H1 (cell line): ENCODE measurements at regions of chr20 and their contacts with region 1.

Region 1: DNA sequence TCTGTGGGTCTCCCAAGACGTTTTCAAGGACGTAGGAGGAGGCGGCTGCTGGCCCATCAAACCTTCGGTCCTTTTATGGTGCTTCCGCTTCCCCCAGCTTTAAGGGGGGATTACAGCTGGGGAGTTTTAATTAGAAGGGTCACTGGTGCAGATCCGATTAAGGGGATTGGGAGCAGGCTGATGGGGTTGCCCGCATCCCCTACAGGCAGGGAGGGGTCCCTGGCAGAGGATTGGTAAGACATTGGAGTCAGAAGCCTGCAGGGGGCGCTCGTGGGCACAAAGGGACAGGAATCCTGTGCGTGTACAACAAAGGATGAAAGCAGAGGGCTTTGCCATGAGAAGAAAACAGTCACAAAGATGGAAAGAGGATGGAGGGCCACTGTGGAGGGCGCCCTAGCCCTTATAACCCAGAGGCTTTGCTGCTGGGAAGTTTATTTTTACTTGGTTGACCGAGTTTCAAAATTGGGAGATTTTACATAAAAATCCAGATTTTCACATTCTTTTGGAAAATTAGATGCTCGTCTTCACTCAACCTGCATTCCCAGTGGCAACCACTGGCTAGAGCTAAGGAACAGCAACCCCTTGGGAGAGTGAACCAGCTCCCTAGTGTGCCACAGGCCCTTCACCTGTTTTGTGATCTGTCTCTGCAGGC is 97.9 kb downstream of the KCNB1 start:
- DNase-seq: peak; percentile 71 to 98
- H3K4me3 ChIP-seq: no peak overlapping the region
- H3K27ac ChIP-seq: no peak overlapping the region
- H3K4me1 ChIP-seq: peaks cover 2 to 8% (median 4%) of the 10 kb centered on the region in 4 experiments; a peak in 4 of 7 replicates
- H3K27me3 ChIP-seq: no peaks in the 10 kb centered on the region; a peak in 1 of 7 replicates
- CTCF ChIP-seq: peak; percentile 77 to 92 (median 89)
- EP300 ChIP-seq: no peak
- POLR2A ChIP-seq: no peak
- RAD21 ChIP-seq: peak; percentile 53 to 71

Region 2: GRCh38 chr20:49344975-49345374 is 39.6 kb before region 1 on chr20:
- CTCF ChIA-PET with region 1: interaction called, 12 read pairs
- POLR2A ChIA-PET with region 1: no interaction called
- DNase-seq: no peak
- H3K4me3 ChIP-seq: no peak overlapping the region
- H3K27ac ChIP-seq: no peak overlapping the region
- H3K4me1 ChIP-seq: no peaks in the 10 kb centered on the region
- H3K27me3 ChIP-seq: no peaks in the 10 kb centered on the region
- CTCF ChIP-seq: no peak
- EP300 ChIP-seq: no peak
- POLR2A ChIP-seq: no peak
- RAD21 ChIP-seq: no peak

Region 3: GRCh38 chr20:49372095-49372726 is 12.4 kb before region 1 on chr20:
- CTCF ChIA-PET with region 1: interaction called, 32 read pairs
- POLR2A ChIA-PET with region 1: interaction called, 4 read pairs
- DNase-seq: no peak
- H3K4me3 ChIP-seq: no peak overlapping the region
- H3K27ac ChIP-seq: no peak overlapping the region
- H3K4me1 ChIP-seq: no peaks in the 10 kb centered on the region; a peak in 1 of 7 replicates
- H3K27me3 ChIP-seq: no peaks in the 10 kb centered on the region
- CTCF ChIP-seq: no peak
- EP300 ChIP-seq: no peak
- POLR2A ChIP-seq: no peak
- RAD21 ChIP-seq: no peak

Region 4: GRCh38 chr20:49418809-49419208 is 34.2 kb after region 1 on chr20:
- CTCF ChIA-PET with region 1: interaction called, 29 read pairs
- POLR2A ChIA-PET with region 1: no interaction called
- DNase-seq: no peak
- H3K4me3 ChIP-seq: no peak overlapping the region
- H3K27ac ChIP-seq: no peak overlapping the region
- H3K4me1 ChIP-seq: no peaks in the 10 kb centered on the region; a peak in 1 of 7 replicates
- H3K27me3 ChIP-seq: no peaks in the 10 kb centered on the region
- CTCF ChIP-seq: no peak
- EP300 ChIP-seq: no peak
- POLR2A ChIP-seq: no peak
- RAD21 ChIP-seq: no peak

Region 5: DNA sequence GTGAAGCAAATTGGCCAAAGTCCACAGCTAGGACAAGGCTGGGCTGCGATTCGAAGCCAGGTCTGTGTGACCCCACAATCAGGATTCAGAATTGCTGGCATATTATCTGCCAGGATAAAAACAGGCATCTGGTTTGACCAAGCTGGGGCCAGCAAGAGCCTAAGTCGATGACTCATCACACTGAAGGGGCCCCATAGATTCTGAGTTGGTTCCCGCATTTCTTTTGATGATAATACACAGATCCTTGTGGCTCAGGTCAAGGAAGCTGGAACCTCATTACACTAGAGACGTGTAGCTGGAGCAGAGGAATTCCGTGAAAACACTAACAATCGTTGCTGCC is 91.4 kb after region 1 on chr20:
- CTCF ChIA-PET with region 1: interaction called, 12 read pairs
- POLR2A ChIA-PET with region 1: no interaction called
- DNase-seq: no peak
- H3K4me3 ChIP-seq: no peak overlapping the region
- H3K27ac ChIP-seq: no peak overlapping the region
- H3K4me1 ChIP-seq: no peaks in the 10 kb centered on the region; a peak in 1 of 7 replicates
- H3K27me3 ChIP-seq: no peaks in the 10 kb centered on the region; a peak in 1 of 7 replicates
- CTCF ChIP-seq: no peak
- EP300 ChIP-seq: no peak
- POLR2A ChIP-seq: no peak
- RAD21 ChIP-seq: no peak

Region 6: DNA sequence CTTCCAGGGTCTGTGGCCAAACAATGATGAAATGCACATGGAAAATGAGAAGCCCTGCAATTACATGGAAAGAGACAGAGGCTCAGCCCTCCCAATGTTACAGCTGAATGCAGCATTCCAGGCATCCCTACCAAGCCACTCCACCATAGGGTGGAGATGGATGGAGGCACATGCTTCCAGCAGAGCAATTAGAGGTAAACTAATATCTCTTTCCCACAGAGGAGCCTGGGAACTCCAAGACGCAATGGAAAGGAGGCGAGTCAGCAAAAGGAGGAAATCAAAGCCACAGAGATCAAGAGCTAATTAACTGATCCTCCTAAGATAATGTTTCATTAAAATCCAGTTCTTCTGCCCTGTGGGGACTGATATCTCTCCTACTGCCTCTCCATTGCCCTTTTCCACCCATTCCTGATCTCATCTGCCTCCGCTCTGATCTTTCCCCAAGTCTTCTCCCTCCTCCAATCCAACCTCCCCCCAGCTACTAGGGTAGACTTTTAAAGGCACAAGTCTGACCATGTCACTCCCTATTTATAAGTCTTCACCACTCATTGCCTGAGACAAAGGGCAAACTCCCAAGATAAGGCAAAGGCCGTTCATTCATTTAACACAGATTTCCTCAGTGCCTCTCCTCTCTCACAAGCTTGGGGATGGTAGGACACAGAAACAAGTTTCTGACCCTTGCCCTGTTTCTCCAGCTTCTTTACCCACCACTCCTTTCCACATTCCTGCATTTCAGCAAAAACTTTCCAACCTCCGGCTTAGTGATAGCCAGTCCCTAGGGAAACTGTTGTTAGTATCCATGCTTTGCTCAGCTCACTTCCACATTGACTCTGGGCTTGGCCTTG is 112.2 kb after region 1 on chr20:
- CTCF ChIA-PET with region 1: interaction called, 21 read pairs
- POLR2A ChIA-PET with region 1: interaction called, 3 read pairs
- DNase-seq: no peak
- H3K4me3 ChIP-seq: no peak overlapping the region
- H3K27ac ChIP-seq: no peak overlapping the region
- H3K4me1 ChIP-seq: no peaks in the 10 kb centered on the region; a peak in 1 of 7 replicates
- H3K27me3 ChIP-seq: no peaks in the 10 kb centered on the region
- CTCF ChIP-seq: no peak
- EP300 ChIP-seq: no peak
- POLR2A ChIP-seq: no peak
- RAD21 ChIP-seq: no peak